ENCODE measurements at regions of chr21 and their contacts with region 1.

Region 1: DNA sequence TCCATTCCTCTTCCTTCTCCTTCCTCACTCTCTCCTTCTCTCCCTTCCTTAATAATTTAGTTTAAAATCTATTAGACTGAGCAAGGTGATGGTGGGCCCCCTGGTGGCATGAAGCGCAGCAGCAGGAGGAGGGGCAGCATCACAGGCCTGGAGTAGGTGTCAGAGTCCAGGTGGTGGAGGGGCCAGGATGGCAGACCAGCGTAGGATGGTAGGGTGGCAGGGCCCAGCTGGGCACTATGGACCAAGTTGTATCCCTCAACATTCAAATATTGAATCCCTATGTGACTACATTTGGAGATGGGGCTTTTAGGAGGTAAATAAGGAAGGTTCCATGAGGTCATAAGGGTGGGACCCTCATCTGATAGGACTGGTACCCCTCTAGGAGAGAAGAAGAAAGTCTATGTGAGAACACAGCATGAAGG is 61.0 kb downstream of the WDR4 start:
- DNase-seq: peak; percentile 54 to 85 (median 84)
- ATAC-seq: peak; percentile 73 to 80
- H3K4me3 ChIP-seq: no peak overlapping the region
- H3K27ac ChIP-seq: no peak overlapping the region
- H3K4me1 ChIP-seq: no peaks in the 10 kb centered on the region
- H3K27me3 ChIP-seq: no peaks in the 10 kb centered on the region

Region 2: DNA sequence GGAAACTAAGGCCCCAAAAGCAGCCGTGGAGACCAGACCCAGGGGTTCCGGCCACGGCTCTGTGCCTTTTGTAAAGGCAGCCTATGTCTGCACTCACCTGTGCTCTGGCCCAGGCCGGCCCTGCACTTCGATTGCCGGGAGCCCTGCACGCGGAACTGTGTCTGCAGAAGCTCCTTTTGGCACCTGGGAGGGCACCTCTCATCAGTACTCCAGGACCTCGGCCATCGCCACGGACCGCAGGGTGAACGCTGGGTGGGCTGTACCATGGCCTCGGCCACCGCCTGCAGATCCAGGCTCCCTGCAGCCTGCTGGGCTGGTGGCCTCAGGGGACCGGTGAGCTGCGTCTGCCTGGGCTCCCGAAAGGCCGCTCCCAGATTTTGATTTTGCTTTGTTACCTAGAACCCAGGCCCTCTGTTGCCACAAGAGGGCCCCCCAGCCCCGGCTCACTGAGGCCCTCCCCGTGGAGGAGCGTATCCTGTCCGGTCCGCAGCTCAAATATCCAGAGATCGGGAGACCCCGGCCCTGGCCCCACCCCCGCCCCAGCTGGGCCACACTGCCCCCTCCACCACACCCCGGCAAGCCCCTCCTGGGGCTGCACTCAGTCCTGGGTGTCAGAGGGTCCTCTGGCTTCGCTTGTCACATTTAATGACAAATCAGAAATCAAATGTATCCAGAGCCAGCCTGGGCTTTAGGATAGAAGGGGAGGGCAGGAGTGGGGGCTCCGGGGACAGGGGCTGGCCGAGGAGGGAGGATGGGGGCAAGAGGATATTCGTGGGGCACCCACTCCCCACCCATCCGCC is 225.1 kb before region 1 on chr21:
- intact Hi-C with region 1: loop called (anchors 1 to 10 kb)
- DNase-seq: peak; percentile 63 to 88 (median 88)
- ATAC-seq: peak; percentile 84 to 90
- H3K4me3 ChIP-seq: no peak overlapping the region
- H3K27ac ChIP-seq: no peak overlapping the region
- H3K4me1 ChIP-seq: no peaks in the 10 kb centered on the region
- H3K27me3 ChIP-seq: no peaks in the 10 kb centered on the region

Region 3: GRCh38 chr21:42652527-42653230 is 165.7 kb before region 1 on chr21:
- intact Hi-C with region 1: loop called in 2 of 4 experiments (anchors 5 to 10 kb)
- DNase-seq: peak; percentile 66 to 88 (median 84)
- ATAC-seq: peak; percentile 75 to 85
- H3K4me3 ChIP-seq: peak overlapping the region; percentile 83
- H3K27ac ChIP-seq: peak overlapping the region; percentile 18
- H3K4me1 ChIP-seq: peaks cover 6% of the 10 kb centered on the region
- H3K27me3 ChIP-seq: no peaks in the 10 kb centered on the region

Region 4: DNA sequence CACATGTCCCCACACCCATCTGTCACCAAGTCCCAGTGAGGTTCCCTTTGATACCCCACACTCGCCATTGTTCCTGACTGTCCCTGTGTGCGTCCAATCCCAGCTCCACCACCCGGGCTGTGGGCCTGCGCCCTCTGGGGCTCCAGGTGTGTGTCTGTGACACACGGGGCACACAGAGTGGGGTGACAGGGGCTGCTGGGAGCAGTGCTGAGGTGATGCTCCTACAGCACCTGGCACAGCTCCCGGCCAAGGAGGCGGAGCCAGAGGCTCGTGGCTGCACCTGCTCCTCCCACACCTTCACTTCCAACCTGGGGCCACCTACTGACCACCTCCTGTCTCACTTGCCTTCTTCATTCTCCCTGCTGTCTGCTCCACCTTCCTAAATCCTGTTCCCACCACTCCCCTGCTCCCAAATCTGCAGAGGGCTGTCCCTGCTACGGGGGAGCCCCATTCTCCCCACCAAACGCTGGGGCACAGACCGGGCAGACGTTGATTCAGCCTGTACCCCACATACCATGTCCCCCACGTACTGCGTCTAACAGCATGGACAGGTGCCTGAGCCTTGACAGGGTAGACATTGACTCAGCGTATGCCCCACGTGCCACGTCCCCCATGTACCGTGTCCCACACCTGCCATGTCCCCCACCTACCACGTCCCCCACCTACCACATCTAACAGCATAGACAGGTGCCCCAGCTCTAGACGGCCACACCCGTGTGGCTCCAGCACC is 44.6 kb after region 1 on chr21:
- intact Hi-C with region 1: no loop called
- DNase-seq: peak in 1 of 3 donors; percentile 34
- ATAC-seq: no peak
- H3K4me3 ChIP-seq: no peak overlapping the region
- H3K27ac ChIP-seq: no peak overlapping the region
- H3K4me1 ChIP-seq: no peaks in the 10 kb centered on the region
- H3K27me3 ChIP-seq: no peaks in the 10 kb centered on the region

Region 5: DNA sequence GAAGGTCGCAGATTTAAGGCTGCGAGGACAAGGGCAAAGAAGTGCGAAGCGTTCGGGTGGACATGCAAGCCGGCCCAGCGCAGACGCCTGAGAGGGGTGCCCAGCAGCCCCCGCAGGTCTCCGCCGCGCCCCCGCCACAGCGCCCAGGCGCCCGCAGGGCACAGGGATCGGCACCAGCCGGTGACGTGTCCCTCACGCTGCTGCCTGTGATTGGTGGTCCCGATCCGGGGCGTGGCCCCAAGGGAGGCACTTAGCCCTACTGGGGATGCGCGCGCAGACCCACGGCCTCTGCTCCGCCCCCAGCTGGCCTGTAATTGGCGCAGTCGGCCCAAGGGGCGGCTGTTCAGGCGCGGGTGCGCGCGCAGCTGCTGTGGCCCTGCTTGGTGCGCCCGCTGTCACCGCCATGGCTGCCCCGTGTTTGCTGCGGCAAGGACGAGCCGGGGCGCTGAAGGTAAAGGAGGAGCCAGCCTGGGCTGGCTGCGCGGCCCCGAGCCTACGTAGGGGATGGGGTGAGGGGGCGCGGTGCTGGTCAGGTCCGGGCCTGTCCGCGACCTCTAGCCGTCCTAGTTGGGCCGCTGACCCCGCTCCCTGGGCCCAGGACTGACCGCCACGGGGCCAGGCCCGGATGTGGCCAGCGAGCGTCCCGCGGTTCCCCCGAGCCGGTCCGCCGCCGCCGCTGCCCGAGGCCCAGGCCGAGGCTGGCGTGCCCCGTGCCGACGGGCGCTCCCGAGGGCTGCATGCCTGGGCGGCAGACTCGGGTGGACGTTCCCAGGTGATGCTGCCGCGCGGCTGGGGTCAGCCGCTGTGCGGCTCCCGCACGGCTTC is 74.8 kb after region 1 on chr21 and contains the start of gene NDUFV3:
- intact Hi-C with region 1: no loop called
- DNase-seq: peak; percentile 100
- ATAC-seq: peak; percentile 99
- H3K4me3 ChIP-seq: peak within 1 kb of the TSS; percentile 44
- H3K27ac ChIP-seq: peak within 1 kb of the TSS; percentile 84
- H3K4me1 ChIP-seq: peaks cover 5% of the 10 kb centered on the region
- H3K27me3 ChIP-seq: no peaks in the 10 kb centered on the region
- total RNA-seq, gene NDUFV3: 48.0 to 52.2 (median 50.7) TPM

Measured in right cardiac atrium (tissue), 5 donors.